AG04449 (cell line): ENCODE measurements at regions of chr16 and their contacts with region 1.

Region 1: GRCh38 chr16:17476414-17477270 is 5.9 kb upstream of the XYLT1 start:
- DNase-seq: no peak
- H3K4me3 ChIP-seq: no peak overlapping the region
- CTCF ChIP-seq: peak; percentile 67

Region 2: GRCh38 chr16:17497648-17498047 is 21.0 kb after region 1 on chr16:
- CTCF ChIA-PET with region 1: interaction called, 10 read pairs
- POLR2A ChIA-PET with region 1: interaction called, 3 read pairs
- DNase-seq: no peak
- H3K4me3 ChIP-seq: no peak overlapping the region
- CTCF ChIP-seq: no peak